ENCODE measurements at regions of chr5 and their contacts with region 1.

Region 1: GRCh38 chr5:6926491-6927038 is 213.3 kb downstream of the TENT4A start:
- DNase-seq: no peak
- H3K4me3 ChIP-seq: no peak overlapping the region
- H3K27ac ChIP-seq: no peak overlapping the region
- H3K4me1 ChIP-seq: no peaks in the 10 kb centered on the region
- H3K27me3 ChIP-seq: no peaks in the 10 kb centered on the region
- CTCF ChIP-seq: no peak
- POLR2A ChIP-seq: no peak

Region 2: DNA sequence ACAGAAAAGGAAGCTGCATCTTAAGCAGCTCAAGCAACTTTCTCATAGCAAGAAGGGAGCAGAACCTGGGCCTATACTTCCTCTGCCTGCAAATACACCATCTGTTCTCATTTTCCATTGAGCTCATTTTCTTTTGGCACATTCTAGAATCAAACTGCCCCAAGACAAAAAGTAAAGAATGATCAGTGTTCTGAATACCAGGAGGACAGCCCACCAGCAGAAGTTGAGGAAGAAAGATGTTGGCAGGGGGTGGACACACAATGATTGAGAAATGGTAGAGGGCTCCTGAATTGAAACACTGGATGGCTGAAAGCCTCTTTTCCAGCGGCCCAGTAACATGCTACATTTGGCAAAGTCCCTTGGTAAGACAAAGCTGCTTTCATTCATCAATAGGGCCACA is 720.1 kb before region 1 on chr5:
- intact Hi-C with region 1: loop called (anchors 5 kb)
- DNase-seq: no peak
- H3K4me3 ChIP-seq: no peak overlapping the region
- H3K27ac ChIP-seq: no peak overlapping the region
- H3K4me1 ChIP-seq: no peaks in the 10 kb centered on the region
- H3K27me3 ChIP-seq: no peaks in the 10 kb centered on the region
- CTCF ChIP-seq: no peak
- POLR2A ChIP-seq: no peak

Region 3: GRCh38 chr5:6979061-6979460 is 52.5 kb after region 1 on chr5:
- intact Hi-C with region 1: loop called (anchors 2 kb)
- DNase-seq: no peak
- H3K4me3 ChIP-seq: no peak overlapping the region
- H3K27ac ChIP-seq: no peak overlapping the region
- H3K4me1 ChIP-seq: no peaks in the 10 kb centered on the region
- H3K27me3 ChIP-seq: no peaks in the 10 kb centered on the region
- CTCF ChIP-seq: no peak
- POLR2A ChIP-seq: no peak